ENCODE measurements at regions of chr11 and their contacts with region 1.

Region 1: GRCh38 chr11:72722050-72722748 is 30.0 kb downstream of the ARAP1 start:
- DNase-seq: peak; percentile 93
- H3K4me3 ChIP-seq: peak overlapping the region; percentile 44
- H3K27ac ChIP-seq: peak overlapping the region; percentile 86
- H3K4me1 ChIP-seq: peaks cover 23% of the 10 kb centered on the region
- H3K27me3 ChIP-seq: no peaks in the 10 kb centered on the region
- CTCF ChIP-seq: no peak

Region 2: GRCh38 chr11:72418834-72419562 is 303.2 kb before region 1 on chr11:
- intact Hi-C with region 1: no loop called
- DNase-seq: no peak
- H3K4me3 ChIP-seq: no peak overlapping the region
- H3K27ac ChIP-seq: no peak overlapping the region
- H3K4me1 ChIP-seq: peaks cover 4% of the 10 kb centered on the region
- H3K27me3 ChIP-seq: no peaks in the 10 kb centered on the region
- CTCF ChIP-seq: no peak

Region 3: DNA sequence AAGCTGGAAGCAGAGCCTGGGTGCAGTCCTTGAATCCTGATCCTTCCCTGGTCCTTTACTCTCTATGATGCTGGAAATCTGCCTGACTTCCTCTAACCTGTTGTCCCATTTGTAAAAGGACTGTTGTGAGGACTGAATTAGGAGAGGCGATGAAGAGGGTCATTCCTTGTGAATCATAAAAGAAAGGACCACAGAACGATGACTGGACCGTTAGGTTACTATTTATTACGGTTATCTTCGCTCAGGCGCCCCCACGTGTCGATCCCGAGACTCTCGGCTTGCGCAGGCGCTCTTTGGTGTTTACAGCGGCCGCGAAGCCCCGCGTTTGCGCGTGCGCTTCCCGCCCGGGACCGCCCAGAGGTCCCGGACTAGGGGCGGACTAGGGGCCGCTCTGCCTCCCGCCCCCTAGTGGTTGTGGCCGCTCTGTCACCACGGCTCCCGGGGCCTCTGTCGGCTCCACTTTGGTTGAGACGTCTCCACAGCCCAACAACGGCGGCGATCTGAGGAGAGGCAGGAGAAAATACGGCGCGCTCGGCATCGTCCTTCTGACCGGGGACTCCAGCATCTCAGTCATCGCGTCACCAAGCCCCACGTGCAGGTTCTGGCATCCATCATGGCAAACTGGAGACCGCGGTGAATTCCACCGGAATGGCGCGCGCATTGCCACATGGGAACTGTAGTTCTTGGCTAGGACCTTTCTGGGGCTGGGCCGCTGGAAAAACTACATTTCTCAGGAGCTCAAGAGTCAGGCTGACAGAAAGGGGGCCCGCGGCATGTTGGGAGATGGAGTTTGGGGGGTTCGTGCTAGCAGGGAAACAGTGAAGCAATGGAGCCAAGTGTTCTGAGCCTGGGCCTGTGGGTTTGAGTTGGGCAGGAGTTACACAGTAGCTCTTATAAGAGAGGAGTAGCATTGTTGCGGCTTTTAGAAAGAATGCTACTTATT is 71.5 kb after region 1 on chr11 and contains the start of gene STARD10:
- intact Hi-C with region 1: loop called (anchors 2 kb)
- DNase-seq: peak; percentile 97
- H3K4me3 ChIP-seq: peak within 1 kb of the TSS; percentile 48
- H3K27ac ChIP-seq: peak within 1 kb of the TSS; percentile 90
- H3K4me1 ChIP-seq: peaks cover 12% of the 10 kb centered on the region
- H3K27me3 ChIP-seq: no peaks in the 10 kb centered on the region
- CTCF ChIP-seq: peak; percentile 97
- total RNA-seq, gene STARD10: 519 to 905 TPM

Region 4: GRCh38 chr11:72814286-72815109 is 92.3 kb after region 1 on chr11 and contains the start of gene ATG16L2:
- intact Hi-C with region 1: loop called (anchors 5 kb)
- DNase-seq: peak; percentile 88
- H3K4me3 ChIP-seq: peak within 1 kb of the TSS; percentile 82
- H3K27ac ChIP-seq: peak within 1 kb of the TSS; percentile 93
- H3K4me1 ChIP-seq: peaks cover 18% of the 10 kb centered on the region
- H3K27me3 ChIP-seq: no peaks in the 10 kb centered on the region
- CTCF ChIP-seq: no peak
- total RNA-seq, gene ATG16L2: 43.5 to 51.3 TPM

Region 5: GRCh38 chr11:73177778-73178577 is 455.8 kb after region 1 on chr11:
- intact Hi-C with region 1: loop called (anchors 5 kb)
- DNase-seq: peak; percentile 82
- H3K4me3 ChIP-seq: no peak overlapping the region
- H3K27ac ChIP-seq: no peak overlapping the region
- H3K4me1 ChIP-seq: no peaks in the 10 kb centered on the region
- H3K27me3 ChIP-seq: no peaks in the 10 kb centered on the region
- CTCF ChIP-seq: peak; percentile 77

Measured in colonic mucosa (tissue), 4 donors.